Dorsolateral prefrontal cortex (tissue), 120 donors: ENCODE measurements at regions of chr11 and their contacts with region 1.

Region 1: GRCh38 chr11:110092515-110093404 is at the start of gene ZC3H12C:
- DNase-seq: peak; percentile 53 to 81 (median 74)
- H3K4me3 ChIP-seq: peak within 1 kb of the TSS; percentile 58 to 91 (median 79)
- H3K27ac ChIP-seq: peak within 1 kb of the TSS; percentile 78 to 99 (median 95)
- H3K27me3 ChIP-seq: no peaks in the 10 kb centered on the region
- CTCF ChIP-seq: peak in 36 of 56 donors; percentile 5 to 73 (median 33)
- total RNA-seq, gene ZC3H12C: 11.6 to 30.2 (median 18.3) TPM

Region 2: GRCh38 chr11:110026858-110027626 is 65.7 kb before region 1 on chr11:
- intact Hi-C with region 1: loop called in 1 of 2 experiments (anchors 5 kb)
- DNase-seq: peak in 2 of 10 donors; percentile 39 to 63
- H3K4me3 ChIP-seq: peak overlapping the region in 1 of 59 donors; percentile 2
- H3K27ac ChIP-seq: peak overlapping the region in 57 of 59 donors; percentile 1 to 84 (median 63)
- H3K27me3 ChIP-seq: peaks cover 0 to 2% (median 0%) of the 10 kb centered on the region in 45 donors
- CTCF ChIP-seq: no peak

Region 3: DNA sequence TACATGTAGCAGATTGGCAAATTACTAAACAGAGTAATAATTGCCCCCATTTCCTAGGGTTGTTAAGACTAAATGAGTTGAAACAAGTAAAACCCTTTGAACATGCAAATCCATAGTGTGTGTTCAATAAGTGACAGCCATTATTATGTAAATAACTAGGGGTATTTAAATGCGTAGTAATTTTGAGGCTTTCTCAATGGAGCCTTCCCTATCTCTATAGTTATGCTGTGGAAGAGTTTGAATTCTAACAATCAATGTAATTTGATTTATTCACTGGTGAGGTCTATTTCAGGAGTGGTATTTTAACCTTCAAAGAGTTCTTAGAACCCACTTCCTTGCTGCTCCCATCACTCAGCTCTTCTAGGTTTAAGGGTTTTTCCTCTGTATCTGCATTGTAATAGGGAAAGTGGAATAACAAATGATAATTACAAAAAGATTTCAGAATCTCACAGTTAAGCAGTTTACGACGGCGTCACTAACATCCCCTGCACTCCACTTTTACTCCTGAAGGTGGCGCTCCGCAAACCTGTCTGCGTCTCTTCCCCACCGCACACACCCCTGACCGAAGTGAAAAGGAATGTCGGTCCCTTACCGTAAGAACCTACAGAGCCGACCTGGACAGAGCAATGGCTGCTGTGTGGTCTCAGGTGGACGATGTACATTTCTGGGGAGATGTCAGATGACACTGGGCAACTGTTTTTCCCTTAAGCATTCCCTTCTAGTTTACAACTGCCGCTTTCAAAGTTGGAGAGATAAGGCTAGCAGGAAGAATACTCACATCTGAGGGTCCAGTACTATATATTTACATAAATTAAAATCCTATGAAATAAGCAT is 81.3 kb after region 1 on chr11:
- intact Hi-C with region 1: loop called in 1 of 2 experiments (anchors 5 kb)
- DNase-seq: peak in 8 of 10 donors; percentile 22 to 68 (median 59)
- H3K4me3 ChIP-seq: peak overlapping the region in 42 of 59 donors; percentile 1 to 53 (median 34)
- H3K27ac ChIP-seq: peak overlapping the region in 12 of 59 donors; percentile 10 to 64 (median 50)
- H3K27me3 ChIP-seq: no peaks in the 10 kb centered on the region
- CTCF ChIP-seq: peak; percentile 51 to 87 (median 74)

Region 4: GRCh38 chr11:110376711-110377324 is 284.1 kb after region 1 on chr11:
- intact Hi-C with region 1: loop called in 1 of 2 experiments (anchors 5 kb)
- DNase-seq: peak in 4 of 10 donors; percentile 33 to 49 (median 42)
- H3K4me3 ChIP-seq: peak overlapping the region in 17 of 59 donors; percentile 3 to 36 (median 17)
- H3K27ac ChIP-seq: peak overlapping the region in 3 of 59 donors; percentile 22 to 47 (median 44)
- H3K27me3 ChIP-seq: no peaks in the 10 kb centered on the region
- CTCF ChIP-seq: peak; percentile 74 to 93 (median 85)